ENCODE measurements at regions of chr5 and their contacts with region 1.

Region 1: DNA sequence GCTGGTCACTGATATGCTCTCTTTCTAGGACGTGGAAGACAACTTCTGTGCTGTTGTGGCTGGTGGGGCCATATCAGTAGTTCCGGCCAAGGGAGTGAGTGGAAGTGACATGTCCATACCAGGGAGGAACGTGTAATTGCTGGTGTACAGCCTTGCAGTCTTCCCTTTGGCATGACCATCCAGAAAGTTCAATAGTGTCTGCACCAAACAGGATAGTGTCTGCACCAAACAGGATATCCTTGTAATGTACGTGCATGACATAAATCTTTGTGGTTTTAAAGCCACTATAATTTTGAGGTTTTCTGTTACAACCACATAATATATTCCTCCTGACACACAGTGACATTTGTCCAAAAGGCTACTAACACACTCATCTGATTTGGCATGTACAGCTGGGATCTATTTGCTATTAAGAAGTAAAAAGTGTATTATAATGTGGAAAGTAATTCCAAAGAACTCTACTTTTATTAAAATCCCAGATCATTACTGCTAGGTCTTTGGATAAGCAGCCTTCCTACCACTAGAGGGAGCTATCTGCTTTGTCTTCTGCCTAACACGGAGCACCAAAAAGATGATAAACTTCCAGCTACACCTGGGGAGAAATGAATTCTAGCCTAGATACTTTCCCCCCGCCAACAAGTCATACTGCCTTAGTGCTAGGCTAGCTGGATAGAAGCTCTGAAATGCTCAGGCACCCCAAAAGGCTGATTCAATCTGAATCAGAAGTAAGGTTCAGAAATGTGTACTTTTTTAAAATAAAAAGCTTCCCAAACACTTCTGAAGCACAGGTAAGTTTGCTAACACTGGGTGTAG is 52.7 kb downstream of the RNF145 start:
- DNase-seq: peak in 7 of 9 donors; percentile 53 to 77 (median 72)
- ATAC-seq: peak; percentile 89
- H3K4me3 ChIP-seq: no peak overlapping the region
- H3K4me3 Mint-ChIP-seq: peak overlapping the region in 1 of 10 donors; percentile 50
- H3K27ac ChIP-seq: peak overlapping the region; percentile 16
- H3K27ac Mint-ChIP-seq: peak overlapping the region; percentile 26 to 92 (median 85)
- H3K4me1 ChIP-seq: peaks cover 8 to 9% of the 10 kb centered on the region in 2 donors
- H3K4me1 Mint-ChIP-seq: peaks cover 0 to 35% (median 23%) of the 10 kb centered on the region in 7 donors
- H3K27me3 ChIP-seq: no peaks in the 10 kb centered on the region
- H3K27me3 Mint-ChIP-seq: no peaks in the 10 kb centered on the region

Region 2: GRCh38 chr5:159178978-159179377 is 22.3 kb after region 1 on chr5:
- CTCF ChIA-PET with region 1: interaction called, 3 read pairs
- POLR2A ChIA-PET with region 1: no interaction called
- intact Hi-C with region 1: loop called in 1 of 2 experiments (anchors 2 kb)
- DNase-seq: peak in 1 of 9 donors; percentile 46
- ATAC-seq: peak; percentile 84
- H3K4me3 ChIP-seq: no peak overlapping the region
- H3K4me3 Mint-ChIP-seq: peak overlapping the region in 3 of 10 donors; percentile 18 to 77 (median 53)
- H3K27ac ChIP-seq: peak overlapping the region; percentile 48
- H3K27ac Mint-ChIP-seq: peak overlapping the region in 8 of 9 donors; percentile 60 to 93 (median 90)
- H3K4me1 ChIP-seq: peaks cover 0 to 22% of the 10 kb centered on the region in 2 donors
- H3K4me1 Mint-ChIP-seq: peaks cover 22 to 93% (median 83%) of the 10 kb centered on the region in 7 donors
- H3K27me3 ChIP-seq: no peaks in the 10 kb centered on the region
- H3K27me3 Mint-ChIP-seq: no peaks in the 10 kb centered on the region

Region 3: DNA sequence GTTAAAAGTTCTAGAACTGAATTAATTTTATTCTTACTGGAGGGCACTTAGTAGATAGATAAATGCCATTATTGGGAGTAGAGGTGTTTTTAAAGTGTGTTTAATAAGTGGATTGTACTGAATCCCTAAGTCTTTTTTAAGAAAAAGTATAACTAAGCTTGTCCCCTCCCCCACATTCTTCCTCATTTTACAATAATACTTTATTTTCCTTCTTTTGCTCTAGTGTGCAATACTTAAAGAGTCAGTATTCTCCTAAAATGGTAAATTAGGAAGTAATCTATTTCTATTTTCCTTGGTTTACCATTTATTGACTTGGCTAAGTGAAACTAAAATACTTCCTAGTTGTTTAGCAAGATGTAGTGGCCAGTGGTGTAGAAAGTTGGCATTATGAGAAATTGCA is 118.0 kb after region 1 on chr5:
- CTCF ChIA-PET with region 1: interaction called, 10 read pairs
- POLR2A ChIA-PET with region 1: no interaction called
- intact Hi-C with region 1: no loop called
- DNase-seq: no peak
- ATAC-seq: no peak
- H3K4me3 ChIP-seq: no peak overlapping the region
- H3K4me3 Mint-ChIP-seq: peak overlapping the region in 4 of 10 donors; percentile 16 to 44 (median 32)
- H3K27ac ChIP-seq: no peak overlapping the region
- H3K27ac Mint-ChIP-seq: peak overlapping the region in 5 of 9 donors; percentile 6 to 55 (median 29)
- H3K4me1 ChIP-seq: no peaks in the 10 kb centered on the region
- H3K4me1 Mint-ChIP-seq: peaks cover 2 to 57% (median 26%) of the 10 kb centered on the region in 7 donors
- H3K27me3 ChIP-seq: no peaks in the 10 kb centered on the region
- H3K27me3 Mint-ChIP-seq: no peaks in the 10 kb centered on the region

Region 4: DNA sequence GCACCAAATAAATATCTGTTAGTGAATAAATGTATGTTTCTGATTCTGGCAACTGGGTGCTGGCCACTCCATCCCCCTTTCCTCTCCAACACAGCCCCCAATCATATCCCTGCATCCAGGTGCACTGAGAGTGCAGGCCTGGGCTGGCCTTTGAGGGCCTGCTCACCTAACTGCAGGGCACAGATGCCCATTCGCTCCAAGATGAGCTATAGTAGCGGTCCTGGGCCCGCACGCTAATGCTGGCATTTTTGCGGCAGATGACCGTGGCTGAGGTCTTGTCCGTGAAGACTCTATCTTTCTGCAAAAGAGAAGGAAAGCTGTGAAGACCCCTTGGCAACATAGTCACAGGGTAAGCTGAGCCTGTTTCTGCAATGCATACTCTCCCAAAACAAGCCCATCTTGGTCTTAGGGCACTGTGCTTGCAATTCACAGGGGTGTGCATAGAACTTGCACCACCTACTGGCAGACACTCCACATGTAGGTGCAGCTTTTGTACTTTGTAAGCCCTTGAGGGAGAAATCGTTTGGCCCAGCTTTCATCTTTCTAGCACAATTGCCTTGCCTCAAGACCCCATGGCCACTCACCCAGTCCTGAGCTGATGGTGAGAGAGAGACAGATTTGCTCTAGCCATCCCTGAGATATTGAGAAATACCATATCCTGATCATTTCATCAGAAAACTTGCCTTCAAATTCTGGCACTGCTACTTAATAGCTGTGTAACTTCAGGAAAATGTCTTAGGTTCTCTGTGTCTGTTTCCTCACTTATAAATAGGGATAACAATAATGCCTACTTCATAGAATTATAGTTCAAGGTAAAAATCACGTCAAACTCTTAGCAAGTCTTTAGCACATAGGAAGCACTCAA is 160.1 kb after region 1 on chr5:
- CTCF ChIA-PET with region 1: interaction called, 63 read pairs
- POLR2A ChIA-PET with region 1: no interaction called
- intact Hi-C with region 1: loop called (anchors 1 kb)
- DNase-seq: peak in 7 of 9 donors; percentile 15 to 50 (median 31)
- ATAC-seq: peak; percentile 73
- H3K4me3 ChIP-seq: no peak overlapping the region
- H3K4me3 Mint-ChIP-seq: no peak overlapping the region
- H3K27ac ChIP-seq: no peak overlapping the region
- H3K27ac Mint-ChIP-seq: no peak overlapping the region
- H3K4me1 ChIP-seq: no peaks in the 10 kb centered on the region
- H3K4me1 Mint-ChIP-seq: peaks cover 0 to 4% (median 0%) of the 10 kb centered on the region in 7 donors
- H3K27me3 ChIP-seq: no peaks in the 10 kb centered on the region
- H3K27me3 Mint-ChIP-seq: peaks cover 0 to 36% (median 4%) of the 10 kb centered on the region in 5 donors

Region 5: DNA sequence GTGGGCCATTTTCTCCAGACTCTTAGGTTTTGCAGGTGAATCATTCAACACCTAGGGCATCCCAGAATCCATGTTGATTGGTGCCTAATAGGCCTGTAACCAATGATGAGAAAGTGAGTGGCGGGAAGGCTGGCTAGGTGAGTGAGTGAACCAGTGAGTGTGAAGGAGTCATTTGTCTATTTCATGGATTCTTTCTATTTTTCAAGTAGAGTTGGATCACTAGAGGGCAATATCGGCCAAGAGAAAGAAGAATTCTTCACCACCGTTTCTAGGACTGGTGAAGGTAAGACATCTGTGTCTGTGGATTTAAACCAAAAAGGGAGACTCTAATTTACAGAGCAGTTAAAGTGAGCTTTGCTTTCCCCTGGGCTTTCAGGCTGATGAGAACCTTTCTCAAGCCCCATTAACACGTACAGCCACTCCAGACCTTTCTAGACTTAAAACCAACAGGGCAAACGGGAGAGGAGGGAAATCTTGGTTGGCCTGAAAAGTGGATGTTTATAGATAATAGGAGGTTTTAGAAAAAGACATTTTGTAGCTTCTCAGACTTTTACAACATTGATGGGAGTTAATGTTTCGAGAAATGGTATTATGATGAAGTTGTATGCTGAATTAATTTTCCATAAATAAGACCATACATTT is 287.9 kb after region 1 on chr5:
- CTCF ChIA-PET with region 1: no interaction called
- POLR2A ChIA-PET with region 1: no interaction called
- intact Hi-C with region 1: loop called in 1 of 2 experiments (anchors 1 kb)
- DNase-seq: peak in 6 of 9 donors; percentile 10 to 55 (median 32)
- ATAC-seq: peak; percentile 47
- H3K4me3 ChIP-seq: no peak overlapping the region
- H3K4me3 Mint-ChIP-seq: no peak overlapping the region
- H3K27ac ChIP-seq: no peak overlapping the region
- H3K27ac Mint-ChIP-seq: peak overlapping the region in 3 of 9 donors; percentile 41 to 69 (median 48)
- H3K4me1 ChIP-seq: no peaks in the 10 kb centered on the region
- H3K4me1 Mint-ChIP-seq: peaks cover 0 to 9% (median 0%) of the 10 kb centered on the region in 7 donors
- H3K27me3 ChIP-seq: no peaks in the 10 kb centered on the region
- H3K27me3 Mint-ChIP-seq: peaks cover 0 to 58% (median 0%) of the 10 kb centered on the region in 5 donors

Region 6: GRCh38 chr5:159657771-159658170 is 501.1 kb after region 1 on chr5:
- CTCF ChIA-PET with region 1: no interaction called
- POLR2A ChIA-PET with region 1: no interaction called
- intact Hi-C with region 1: no loop called
- DNase-seq: no peak
- ATAC-seq: no peak
- H3K4me3 ChIP-seq: no peak overlapping the region
- H3K4me3 Mint-ChIP-seq: no peak overlapping the region
- H3K27ac ChIP-seq: no peak overlapping the region
- H3K27ac Mint-ChIP-seq: no peak overlapping the region
- H3K4me1 ChIP-seq: no peaks in the 10 kb centered on the region
- H3K4me1 Mint-ChIP-seq: no peaks in the 10 kb centered on the region
- H3K27me3 ChIP-seq: no peaks in the 10 kb centered on the region
- H3K27me3 Mint-ChIP-seq: peaks cover 0 to 7% (median 0%) of the 10 kb centered on the region in 5 donors

Region 7: DNA sequence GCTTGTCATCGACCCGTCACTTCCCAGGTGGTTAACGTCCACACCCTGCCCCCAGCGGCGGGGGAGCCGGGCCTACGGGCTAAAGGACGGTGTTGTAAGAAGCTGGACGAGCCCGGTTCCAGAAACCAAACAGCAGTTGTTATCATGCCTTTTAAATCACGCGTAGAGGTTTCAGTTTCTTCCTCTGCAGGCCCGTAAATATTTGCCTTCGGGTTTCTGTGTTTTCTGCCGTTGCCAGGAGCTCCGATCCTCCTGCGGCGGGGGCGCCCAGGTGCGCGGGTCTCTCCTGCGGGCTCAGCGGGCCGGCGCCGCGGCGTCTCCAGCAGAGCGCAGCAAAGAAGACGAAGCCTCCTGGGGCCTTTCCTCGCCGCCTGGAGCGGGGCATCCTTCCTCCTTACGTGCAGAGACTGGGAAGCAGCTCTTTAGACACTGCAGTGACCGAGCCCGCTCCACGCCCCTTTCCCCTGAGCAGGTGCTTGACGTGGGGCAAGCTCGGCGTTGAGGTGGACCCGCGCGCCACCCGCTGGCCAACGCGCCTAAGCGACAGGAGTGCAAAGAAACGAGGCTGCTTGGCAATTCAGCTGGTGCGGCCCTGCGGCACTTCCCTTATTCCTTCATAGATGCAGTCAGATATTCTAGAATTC is 830.5 kb after region 1 on chr5:
- CTCF ChIA-PET with region 1: interaction called, 10 read pairs
- POLR2A ChIA-PET with region 1: no interaction called
- intact Hi-C with region 1: loop called (anchors 1 kb)
- DNase-seq: peak; percentile 56 to 73 (median 69)
- ATAC-seq: peak; percentile 92
- H3K4me3 ChIP-seq: peak overlapping the region; percentile 58
- H3K4me3 Mint-ChIP-seq: peak overlapping the region; percentile 55 to 78 (median 66)
- H3K27ac ChIP-seq: no peak overlapping the region
- H3K27ac Mint-ChIP-seq: peak overlapping the region in 3 of 9 donors; percentile 70 to 83 (median 70)
- H3K4me1 ChIP-seq: peaks cover 0 to 6% of the 10 kb centered on the region in 2 donors
- H3K4me1 Mint-ChIP-seq: peaks cover 0 to 3% (median 0%) of the 10 kb centered on the region in 7 donors
- H3K27me3 ChIP-seq: peaks cover 0 to 5% of the 10 kb centered on the region in 2 donors
- H3K27me3 Mint-ChIP-seq: peaks cover 24 to 70% (median 34%) of the 10 kb centered on the region in 5 donors

Measured in naive thymus-derived CD4-positive, alpha-beta T cell (primary cell).